Right ventricle myocardium inferior (tissue), 1 donor: ENCODE measurements at regions of chr5 and their contacts with region 1.

Region 1: DNA sequence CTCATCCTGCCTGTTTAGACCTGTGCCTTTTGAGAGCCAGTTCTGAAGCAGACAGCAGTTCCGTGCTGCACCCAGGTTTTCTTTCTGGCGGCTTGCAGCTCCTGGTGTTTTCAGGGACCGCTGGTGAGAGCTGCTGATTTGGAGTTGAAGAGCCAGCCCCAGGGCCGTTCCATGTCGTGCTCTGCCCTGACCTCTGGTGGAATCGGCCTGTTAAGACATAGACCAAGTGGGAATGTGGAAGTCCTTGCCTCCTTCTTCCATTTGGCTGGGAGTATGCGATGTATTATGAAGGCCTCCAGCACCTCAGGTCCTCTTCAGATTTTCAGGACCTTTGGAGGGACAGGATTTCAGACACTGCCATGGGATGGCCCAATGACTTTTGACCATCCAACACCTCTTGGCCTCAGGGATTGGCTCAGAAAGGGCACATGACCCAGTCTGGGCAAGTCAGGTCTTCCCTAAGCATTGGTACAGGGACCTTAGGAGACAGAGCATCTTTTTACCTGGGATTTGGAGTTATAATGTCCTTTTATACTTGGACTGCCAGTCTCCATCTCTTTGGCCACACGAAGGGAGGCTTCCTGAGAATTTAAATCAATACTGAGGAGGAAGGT is 136.1 kb upstream of the CLINT1 start:
- DNase-seq: peak; percentile 80
- ATAC-seq: peak; percentile 97

Region 2: DNA sequence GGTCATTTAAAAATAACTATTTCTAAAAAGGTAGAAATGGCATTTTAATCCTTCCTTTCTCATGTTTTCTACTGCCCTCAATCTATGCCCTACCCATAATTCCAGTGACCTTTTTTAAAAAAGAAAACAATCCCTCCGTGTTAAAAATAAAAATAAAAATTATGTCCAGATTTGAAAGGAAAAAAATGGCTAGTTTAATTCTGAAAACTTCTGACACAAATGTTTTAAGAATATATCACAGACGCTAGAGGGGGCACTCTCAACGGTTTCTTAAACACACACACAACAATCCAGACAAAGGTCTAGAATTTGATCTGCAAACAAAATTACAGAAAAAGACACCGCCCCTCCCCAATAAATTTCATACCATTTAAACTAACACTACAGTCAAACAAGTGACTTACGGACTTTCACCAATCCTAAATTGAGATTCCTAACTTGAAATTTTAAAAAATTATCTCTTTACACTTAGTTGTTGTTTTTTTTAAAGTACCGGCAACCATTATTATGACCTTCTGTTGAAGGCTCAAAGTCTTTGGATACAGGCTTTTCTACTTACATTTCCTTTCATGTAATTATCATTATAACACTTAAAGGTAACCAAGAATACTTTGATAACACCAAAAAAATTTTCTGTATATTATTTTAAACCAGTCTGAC is 174.3 kb before region 1 on chr5:
- intact Hi-C with region 1: loop called (anchors 2 kb)
- DNase-seq: no peak
- ATAC-seq: no peak

Region 3: GRCh38 chr5:157971571-157972216 is 23.3 kb before region 1 on chr5:
- intact Hi-C with region 1: no loop called
- DNase-seq: no peak
- ATAC-seq: peak; percentile 89